ENCODE measurements at regions of chr10 and their contacts with region 1.

Region 1: DNA sequence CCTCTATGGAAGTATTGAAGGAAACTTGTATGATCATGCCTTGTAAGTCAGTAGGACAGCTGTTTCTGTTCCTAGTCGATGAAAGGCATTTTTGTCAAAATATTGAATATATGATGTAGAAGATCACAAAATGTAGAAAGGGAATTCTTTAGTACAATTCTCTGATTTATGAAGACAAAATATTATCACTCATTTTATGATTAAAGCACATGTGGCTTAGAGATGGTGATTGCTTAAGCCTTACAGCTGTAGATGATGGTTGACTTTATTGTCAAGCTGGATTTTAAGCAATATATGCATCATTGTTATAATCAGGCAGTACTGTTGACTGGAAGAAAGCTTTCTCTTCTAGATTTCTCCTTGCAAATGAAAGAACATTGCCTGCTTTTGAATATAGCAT is 26.4 kb downstream of the MXI1 start:
- DNase-seq: no peak
- ATAC-seq: no peak
- H3K4me3 ChIP-seq: no peak overlapping the region
- H3K4me3 Mint-ChIP-seq: no peak overlapping the region
- H3K27ac ChIP-seq: no peak overlapping the region
- H3K27ac Mint-ChIP-seq: no peak overlapping the region
- H3K4me1 ChIP-seq: no peaks in the 10 kb centered on the region
- H3K4me1 Mint-ChIP-seq: no peaks in the 10 kb centered on the region
- H3K27me3 ChIP-seq: no peaks in the 10 kb centered on the region
- H3K27me3 Mint-ChIP-seq: no peaks in the 10 kb centered on the region
- CTCF ChIP-seq: no peak

Region 2: DNA sequence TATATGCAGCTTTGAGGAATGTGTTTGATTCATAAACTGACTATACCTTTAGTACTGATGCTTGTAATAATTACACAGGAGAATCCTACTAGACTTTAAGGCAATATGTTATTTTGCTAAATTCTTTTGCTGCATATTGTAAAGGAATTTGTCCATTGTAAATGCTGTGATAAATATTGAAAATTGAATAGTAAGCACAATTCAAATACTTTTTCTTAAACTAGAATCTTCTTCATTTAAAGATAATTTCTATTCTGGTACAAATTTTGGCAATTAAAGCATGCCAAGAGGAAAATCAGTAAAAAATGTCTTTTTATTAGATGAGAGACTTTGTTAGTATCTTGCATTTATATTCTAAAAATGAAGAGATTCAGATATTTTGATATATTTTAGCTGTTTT is 25.5 kb after region 1 on chr10:
- CTCF ChIA-PET with region 1: no interaction called
- POLR2A ChIA-PET with region 1: no interaction called
- intact Hi-C with region 1: no loop called
- DNase-seq: no peak
- ATAC-seq: no peak
- H3K4me3 ChIP-seq: no peak overlapping the region
- H3K4me3 Mint-ChIP-seq: no peak overlapping the region
- H3K27ac ChIP-seq: no peak overlapping the region
- H3K27ac Mint-ChIP-seq: no peak overlapping the region
- H3K4me1 ChIP-seq: no peaks in the 10 kb centered on the region
- H3K4me1 Mint-ChIP-seq: no peaks in the 10 kb centered on the region
- H3K27me3 ChIP-seq: no peaks in the 10 kb centered on the region
- H3K27me3 Mint-ChIP-seq: no peaks in the 10 kb centered on the region
- CTCF ChIP-seq: no peak

Region 3: DNA sequence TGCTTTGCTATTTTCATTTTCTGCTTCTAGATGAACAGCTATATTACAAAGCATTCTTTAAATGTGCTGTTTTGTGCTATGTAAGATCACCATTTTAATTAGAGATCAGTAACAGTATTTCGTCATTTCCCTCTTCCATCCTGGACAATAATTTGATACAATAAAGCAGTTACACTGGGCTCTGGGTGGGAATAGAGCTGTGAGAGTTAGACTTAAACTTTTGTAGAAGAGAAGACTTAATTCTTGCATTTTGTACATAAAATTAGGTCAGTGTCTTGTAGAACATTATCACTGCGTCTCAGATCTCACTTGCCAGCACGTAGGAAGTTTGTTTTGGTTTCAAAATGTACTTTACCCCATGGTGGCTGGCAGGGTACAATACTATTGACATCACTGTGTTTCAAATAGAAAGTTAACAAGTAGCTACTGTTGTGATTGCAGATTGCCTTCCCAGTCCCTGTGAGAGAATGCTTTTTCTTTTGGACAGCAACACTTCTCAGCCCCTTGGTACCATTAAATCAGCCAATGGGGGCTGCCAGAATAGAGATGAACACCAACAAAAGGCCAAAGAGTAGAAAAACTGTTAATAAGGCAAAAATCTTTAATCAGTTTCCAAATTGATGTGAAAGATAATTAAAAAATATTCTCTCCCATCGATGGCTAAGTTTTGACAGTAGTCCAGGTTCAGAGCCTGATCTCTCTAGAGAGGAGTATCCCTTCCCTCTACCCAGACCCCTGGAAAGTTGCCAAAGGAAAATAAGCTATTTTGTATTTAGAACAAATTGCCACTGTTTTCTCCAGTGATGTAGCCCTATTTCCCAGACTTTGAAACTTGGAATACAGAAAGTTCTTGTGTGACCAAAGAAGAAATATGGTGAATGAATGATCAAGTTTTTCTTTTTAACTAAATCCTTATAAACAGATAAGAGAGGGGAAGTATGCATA is 35.8 kb after region 1 on chr10:
- CTCF ChIA-PET with region 1: interaction called, 4 read pairs
- POLR2A ChIA-PET with region 1: no interaction called
- intact Hi-C with region 1: loop called (anchors 5 kb)
- DNase-seq: peak; percentile 15
- ATAC-seq: peak; percentile 17
- H3K4me3 ChIP-seq: peak overlapping the region in 1 of 5 experiments; percentile 27
- H3K4me3 Mint-ChIP-seq: peak overlapping the region; percentile 51
- H3K27ac ChIP-seq: peak overlapping the region in 1 of 2 donors; percentile 38
- H3K27ac Mint-ChIP-seq: no peak overlapping the region
- H3K4me1 ChIP-seq: peaks cover 0 to 24% of the 10 kb centered on the region in 2 donors
- H3K4me1 Mint-ChIP-seq: peaks cover 35% of the 10 kb centered on the region
- H3K27me3 ChIP-seq: no peaks in the 10 kb centered on the region
- H3K27me3 Mint-ChIP-seq: no peaks in the 10 kb centered on the region
- CTCF ChIP-seq: no peak

Region 4: DNA sequence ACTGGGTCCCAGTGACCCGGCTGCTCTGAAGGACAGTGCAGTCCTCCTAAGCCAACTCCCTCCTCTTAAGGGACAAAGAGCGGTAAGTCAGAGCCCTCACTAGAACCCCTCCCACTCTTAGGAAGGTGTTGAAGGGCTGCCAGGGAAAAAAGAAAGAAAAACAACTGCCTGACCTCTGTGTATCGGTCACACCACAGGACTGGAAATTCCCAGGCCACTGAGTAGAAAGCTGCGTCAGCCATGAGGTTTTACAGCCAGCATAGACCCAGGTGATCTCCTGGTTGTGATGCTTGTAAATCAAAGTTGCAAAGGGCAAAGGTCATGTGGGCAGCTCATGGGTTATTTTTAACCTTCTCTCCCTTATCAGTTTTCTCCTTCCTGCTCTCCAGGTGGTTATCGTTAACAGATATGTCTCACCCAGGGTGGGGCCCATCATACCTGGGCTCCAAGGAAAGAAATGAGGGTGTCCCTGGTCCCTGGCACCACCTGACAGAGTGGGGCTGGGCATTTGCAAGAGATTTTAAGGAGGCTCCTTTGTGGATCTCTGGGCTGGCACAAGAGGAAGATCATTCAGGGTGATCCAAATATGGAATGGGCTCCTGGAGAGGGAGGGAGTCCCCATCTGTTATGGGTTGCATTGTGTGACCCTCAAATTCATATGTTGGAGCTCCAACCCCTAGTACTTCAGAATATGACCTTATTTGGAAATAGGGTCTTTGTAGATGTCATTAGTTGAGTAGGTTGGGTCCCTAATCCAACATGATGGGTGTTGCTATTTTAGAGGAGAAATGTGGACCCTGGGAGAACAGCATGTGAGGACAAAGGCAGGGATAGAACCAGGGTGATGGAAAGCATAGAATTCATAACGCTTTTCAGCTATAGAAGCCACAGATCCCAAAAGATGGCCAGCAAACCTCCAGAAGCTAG is 162.1 kb after region 1 on chr10:
- CTCF ChIA-PET with region 1: no interaction called
- POLR2A ChIA-PET with region 1: no interaction called
- intact Hi-C with region 1: no loop called
- DNase-seq: peak; percentile 32
- ATAC-seq: peak; percentile 36
- H3K4me3 ChIP-seq: no peak overlapping the region
- H3K4me3 Mint-ChIP-seq: no peak overlapping the region
- H3K27ac ChIP-seq: no peak overlapping the region
- H3K27ac Mint-ChIP-seq: peak overlapping the region; percentile 39
- H3K4me1 ChIP-seq: no peaks in the 10 kb centered on the region
- H3K4me1 Mint-ChIP-seq: peaks cover 6% of the 10 kb centered on the region
- H3K27me3 ChIP-seq: peaks cover 0 to 8% (median 0%) of the 10 kb centered on the region in 4 experiments
- H3K27me3 Mint-ChIP-seq: peaks cover 20% of the 10 kb centered on the region
- CTCF ChIP-seq: no peak

Measured in B cell (primary cell).